CD4-positive, alpha-beta memory T cell (primary cell): ENCODE measurements at regions of chr10 and their contacts with region 1.

Region 1: DNA sequence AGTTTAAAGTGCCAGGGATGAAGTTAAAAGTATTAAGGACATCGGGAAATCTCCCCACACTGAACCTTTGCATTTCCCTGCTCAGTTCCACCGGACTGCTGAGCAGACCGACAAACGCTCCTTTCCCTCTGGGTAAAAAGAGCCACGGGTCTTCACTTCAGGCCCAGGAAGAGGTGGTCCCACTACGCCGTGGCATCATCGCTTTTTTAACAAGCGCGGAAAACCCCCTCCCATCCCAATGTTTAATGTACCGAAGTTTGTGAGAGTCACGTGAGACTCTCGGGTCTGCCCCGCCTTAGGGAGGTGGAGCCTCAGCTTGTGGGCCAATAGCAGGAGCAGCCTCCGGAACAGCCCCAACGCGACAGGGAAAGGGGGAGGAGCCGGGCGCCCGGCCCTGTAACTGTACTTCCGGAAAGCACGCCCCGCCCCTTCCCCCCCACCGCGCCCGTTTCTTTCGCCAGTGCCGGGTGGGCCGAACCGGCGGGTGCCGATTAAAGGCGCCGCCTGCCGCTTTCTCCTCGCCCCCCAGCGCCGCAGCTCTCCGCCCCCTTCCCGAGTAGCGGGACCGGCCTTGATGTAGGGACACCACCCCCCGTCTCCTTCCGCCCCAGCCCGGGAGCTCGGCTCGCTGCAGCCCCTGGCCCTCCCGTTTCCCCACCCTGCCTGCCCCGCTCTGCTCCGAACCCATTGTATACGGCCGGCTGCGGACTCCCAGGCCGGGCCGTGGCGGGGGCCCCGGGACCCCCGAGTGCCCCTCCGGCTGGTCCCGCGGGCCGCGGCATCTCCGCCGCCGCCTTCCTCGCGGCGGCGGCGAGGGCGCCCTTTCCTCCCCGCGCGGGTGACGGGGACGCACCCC is 2.2 kb upstream of the TRIM8 start:
- DNase-seq: peak; percentile 91 to 99 (median 95)
- H3K4me3 ChIP-seq: peak overlapping the region; percentile 26 to 78
- H3K4me3 Mint-ChIP-seq: peak overlapping the region; percentile 90 to 97 (median 94)
- H3K27ac ChIP-seq: peak overlapping the region; percentile 94
- H3K27ac Mint-ChIP-seq: peak overlapping the region; percentile 96 to 99 (median 98)
- H3K4me1 ChIP-seq: peaks cover 14% of the 10 kb centered on the region
- H3K4me1 Mint-ChIP-seq: peaks cover 13 to 39% (median 18%) of the 10 kb centered on the region in 4 donors
- H3K27me3 ChIP-seq: no peaks in the 10 kb centered on the region
- H3K27me3 Mint-ChIP-seq: no peaks in the 10 kb centered on the region

Region 2: GRCh38 chr10:102245101-102245931 is 396.8 kb before region 1 on chr10 and contains the start of gene GBF1:
- CTCF ChIA-PET with region 1: no interaction called
- POLR2A ChIA-PET with region 1: interaction called, 6 read pairs
- intact Hi-C with region 1: loop called (anchors 1 kb)
- DNase-seq: peak; percentile 95 to 98 (median 96)
- H3K4me3 ChIP-seq: peak within 1 kb of the TSS; percentile 51 to 94
- H3K4me3 Mint-ChIP-seq: peak within 1 kb of the TSS; percentile 84 to 99 (median 98)
- H3K27ac ChIP-seq: peak within 1 kb of the TSS; percentile 96
- H3K27ac Mint-ChIP-seq: peak within 1 kb of the TSS; percentile 89 to 98 (median 97)
- H3K4me1 ChIP-seq: peaks cover 64% of the 10 kb centered on the region
- H3K4me1 Mint-ChIP-seq: peaks cover 38 to 66% (median 50%) of the 10 kb centered on the region in 4 donors
- H3K27me3 ChIP-seq: peaks cover 6% of the 10 kb centered on the region
- H3K27me3 Mint-ChIP-seq: peaks cover 3 to 16% of the 10 kb centered on the region in 2 donors
- total RNA-seq, gene GBF1: 39.6 to 44.7 TPM

Region 3: DNA sequence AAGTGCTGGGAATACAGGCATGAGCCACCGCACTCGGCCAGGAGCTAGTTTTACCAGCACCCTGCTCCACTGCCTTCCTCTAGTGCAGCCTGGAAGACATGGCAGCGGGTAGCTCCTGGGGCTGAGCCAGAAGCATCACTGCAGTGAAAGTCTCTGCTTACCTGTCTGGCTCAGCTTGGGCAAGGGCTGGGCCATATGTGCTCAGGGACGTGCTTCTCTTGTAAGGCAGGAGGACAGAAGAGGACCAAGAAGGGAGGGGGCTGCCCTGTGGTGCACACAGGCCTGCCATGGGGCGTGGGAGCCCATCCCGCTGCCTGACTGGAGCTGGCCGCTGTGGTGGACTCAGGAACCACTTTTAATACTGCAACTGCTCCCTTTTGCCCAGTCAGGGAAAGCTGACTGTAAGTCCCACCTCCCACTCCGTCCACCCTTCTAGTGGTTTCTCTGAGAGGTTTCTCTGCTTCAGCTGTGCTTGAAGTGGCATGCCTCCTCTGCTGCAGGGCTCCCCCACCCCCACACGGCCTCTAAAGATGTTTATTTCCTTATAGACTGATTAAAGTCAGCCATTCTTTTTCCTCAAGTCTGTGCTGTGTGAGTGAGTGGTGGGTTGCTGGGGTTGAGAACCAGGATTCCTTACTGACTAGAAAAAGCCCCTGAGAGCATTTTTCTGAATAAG is 165.5 kb before region 1 on chr10:
- CTCF ChIA-PET with region 1: no interaction called
- POLR2A ChIA-PET with region 1: no interaction called
- intact Hi-C with region 1: no loop called
- DNase-seq: no peak
- H3K4me3 ChIP-seq: no peak overlapping the region
- H3K4me3 Mint-ChIP-seq: no peak overlapping the region
- H3K27ac ChIP-seq: no peak overlapping the region
- H3K27ac Mint-ChIP-seq: peak overlapping the region in 6 of 7 donors; percentile 18 to 86 (median 59)
- H3K4me1 ChIP-seq: peaks cover 20% of the 10 kb centered on the region
- H3K4me1 Mint-ChIP-seq: peaks cover 11 to 28% (median 17%) of the 10 kb centered on the region in 4 donors
- H3K27me3 ChIP-seq: no peaks in the 10 kb centered on the region
- H3K27me3 Mint-ChIP-seq: no peaks in the 10 kb centered on the region

Region 4: DNA sequence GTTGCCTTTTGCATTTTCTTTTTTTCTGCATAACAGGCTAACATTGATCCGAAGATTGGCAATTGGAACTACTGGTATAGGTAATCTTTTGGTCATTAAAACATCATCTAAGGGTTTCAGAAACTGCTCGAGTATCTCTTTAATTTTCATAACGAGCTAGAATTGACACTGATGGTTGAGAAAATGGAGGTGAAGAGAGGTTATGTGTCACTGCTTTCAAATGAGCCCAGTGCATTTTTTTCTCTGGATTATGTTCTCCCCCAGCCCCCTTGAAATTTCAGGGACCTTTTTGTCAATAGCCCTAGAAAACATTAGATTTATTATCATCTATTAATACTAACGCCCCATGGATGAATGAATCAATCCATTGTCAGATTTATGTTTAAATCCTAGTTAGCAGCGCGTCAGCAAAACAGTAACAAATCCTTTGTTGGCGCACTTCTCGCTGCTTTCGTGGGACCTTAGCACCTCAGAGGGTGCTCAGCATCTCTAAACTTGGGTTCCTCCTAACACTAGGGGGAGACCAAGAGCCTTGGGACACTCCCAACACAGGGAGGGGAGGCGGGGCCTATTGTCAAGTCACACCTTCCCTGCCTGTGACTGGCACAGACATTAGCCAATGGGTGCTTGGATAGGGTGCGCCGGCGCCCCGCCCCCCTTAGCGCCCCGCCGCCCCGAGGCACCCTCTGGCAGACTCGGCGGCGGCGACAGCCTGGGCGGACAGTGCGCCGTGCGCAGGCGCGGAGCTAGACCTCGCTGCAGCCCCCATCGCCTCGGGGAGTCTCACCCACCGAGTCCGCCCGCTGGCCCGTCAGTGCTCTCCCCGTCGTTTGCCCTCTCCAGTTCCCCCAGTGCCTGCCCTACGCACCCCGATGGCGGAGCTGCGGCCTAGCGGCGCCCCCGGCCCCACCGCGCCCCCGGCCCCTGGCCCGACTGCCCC is 138.6 kb before region 1 on chr10 and contains the start of gene SUFU:
- CTCF ChIA-PET with region 1: interaction called, 18 read pairs
- POLR2A ChIA-PET with region 1: interaction called, 48 read pairs
- intact Hi-C with region 1: loop called (anchors 1 kb)
- DNase-seq: peak; percentile 98 to 99 (median 98)
- H3K4me3 ChIP-seq: peak within 1 kb of the TSS; percentile 97 to 99
- H3K4me3 Mint-ChIP-seq: peak within 1 kb of the TSS in 2 of 8 donors; percentile 92 to 95
- H3K27ac ChIP-seq: peak within 1 kb of the TSS; percentile 91
- H3K27ac Mint-ChIP-seq: peak within 1 kb of the TSS in 6 of 7 donors; percentile 86 to 95 (median 94)
- H3K4me1 ChIP-seq: peaks cover 54% of the 10 kb centered on the region
- H3K4me1 Mint-ChIP-seq: peaks cover 21 to 49% (median 35%) of the 10 kb centered on the region in 4 donors
- H3K27me3 ChIP-seq: no peaks in the 10 kb centered on the region
- H3K27me3 Mint-ChIP-seq: no peaks in the 10 kb centered on the region
- total RNA-seq, gene SUFU: 20.5 to 22.0 TPM

Region 5: DNA sequence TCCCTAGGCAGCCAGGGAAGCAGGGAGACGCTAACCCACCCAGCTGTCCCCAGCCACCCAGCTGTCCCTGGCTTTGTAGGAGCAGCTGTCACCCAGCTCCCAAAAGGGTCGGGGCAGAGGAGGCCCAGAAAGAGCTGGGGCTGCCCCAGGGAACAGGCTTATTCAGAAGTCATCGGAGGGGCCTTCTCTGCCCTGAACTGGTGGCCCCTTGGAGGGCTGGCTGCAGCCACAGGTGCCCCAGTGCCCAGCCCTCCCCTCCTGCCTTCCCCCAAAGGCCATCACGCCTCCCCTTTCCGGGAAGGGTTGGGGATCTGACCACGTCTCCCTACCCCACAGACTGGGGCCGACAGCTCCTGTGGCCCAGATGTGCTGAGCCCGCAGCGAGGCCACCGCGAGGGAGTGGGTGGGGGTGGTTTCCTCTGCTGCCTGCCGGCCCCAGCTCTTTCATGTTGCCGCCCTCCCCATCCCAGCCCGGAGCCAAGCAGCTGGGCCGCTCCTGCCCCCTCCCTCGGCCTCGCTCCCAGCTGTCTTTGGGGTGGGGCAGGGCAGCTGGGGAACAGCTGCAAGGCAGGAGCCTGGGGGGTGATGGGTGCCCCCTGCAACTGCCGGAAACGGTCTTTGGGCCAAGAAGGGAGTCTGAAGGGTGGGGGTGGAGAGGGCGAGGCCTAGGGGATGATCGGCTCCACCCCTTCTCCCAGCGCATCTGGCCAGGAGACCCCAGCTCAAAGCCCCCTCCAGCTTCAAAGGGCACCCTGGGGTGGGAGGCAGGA is 19.0 kb after region 1 on chr10:
- CTCF ChIA-PET with region 1: interaction called, 40 read pairs
- POLR2A ChIA-PET with region 1: interaction called, 206 read pairs
- intact Hi-C with region 1: loop called (anchors 1 kb)
- DNase-seq: peak; percentile 50 to 67 (median 60)
- H3K4me3 ChIP-seq: peak overlapping the region in 1 of 2 donors; percentile 27
- H3K4me3 Mint-ChIP-seq: peak overlapping the region; percentile 42 to 87 (median 60)
- H3K27ac ChIP-seq: peak overlapping the region; percentile 48
- H3K27ac Mint-ChIP-seq: peak overlapping the region; percentile 41 to 94 (median 85)
- H3K4me1 ChIP-seq: peaks cover 45% of the 10 kb centered on the region
- H3K4me1 Mint-ChIP-seq: peaks cover 22 to 49% (median 30%) of the 10 kb centered on the region in 4 donors
- H3K27me3 ChIP-seq: no peaks in the 10 kb centered on the region
- H3K27me3 Mint-ChIP-seq: no peaks in the 10 kb centered on the region

Region 6: GRCh38 chr10:102743588-102744373 is 101.7 kb after region 1 on chr10 and contains the start of gene WBP1L:
- CTCF ChIA-PET with region 1: no interaction called
- POLR2A ChIA-PET with region 1: interaction called, 36 read pairs
- intact Hi-C with region 1: loop called (anchors 1 kb)
- DNase-seq: peak; percentile 95 to 98 (median 97)
- H3K4me3 ChIP-seq: peak within 1 kb of the TSS; percentile 79 to 96
- H3K4me3 Mint-ChIP-seq: peak within 1 kb of the TSS; percentile 90 to 99 (median 96)
- H3K27ac ChIP-seq: peak within 1 kb of the TSS; percentile 81
- H3K27ac Mint-ChIP-seq: peak within 1 kb of the TSS; percentile 69 to 99 (median 94)
- H3K4me1 ChIP-seq: peaks cover 35% of the 10 kb centered on the region
- H3K4me1 Mint-ChIP-seq: peaks cover 33 to 50% (median 42%) of the 10 kb centered on the region in 4 donors
- H3K27me3 ChIP-seq: no peaks in the 10 kb centered on the region
- H3K27me3 Mint-ChIP-seq: no peaks in the 10 kb centered on the region
- total RNA-seq, gene WBP1L: 39.3 to 41.1 TPM

Region 7: GRCh38 chr10:102904346-102904745 is 262.2 kb after region 1 on chr10:
- CTCF ChIA-PET with region 1: no interaction called
- POLR2A ChIA-PET with region 1: no interaction called
- intact Hi-C with region 1: no loop called
- DNase-seq: no peak
- H3K4me3 ChIP-seq: no peak overlapping the region
- H3K4me3 Mint-ChIP-seq: no peak overlapping the region
- H3K27ac ChIP-seq: no peak overlapping the region
- H3K27ac Mint-ChIP-seq: no peak overlapping the region
- H3K4me1 ChIP-seq: no peaks in the 10 kb centered on the region
- H3K4me1 Mint-ChIP-seq: no peaks in the 10 kb centered on the region
- H3K27me3 ChIP-seq: no peaks in the 10 kb centered on the region
- H3K27me3 Mint-ChIP-seq: no peaks in the 10 kb centered on the region